MCF 10A (cell line): ENCODE measurements at regions of chr12 and their contacts with region 1.

Region 1: DNA sequence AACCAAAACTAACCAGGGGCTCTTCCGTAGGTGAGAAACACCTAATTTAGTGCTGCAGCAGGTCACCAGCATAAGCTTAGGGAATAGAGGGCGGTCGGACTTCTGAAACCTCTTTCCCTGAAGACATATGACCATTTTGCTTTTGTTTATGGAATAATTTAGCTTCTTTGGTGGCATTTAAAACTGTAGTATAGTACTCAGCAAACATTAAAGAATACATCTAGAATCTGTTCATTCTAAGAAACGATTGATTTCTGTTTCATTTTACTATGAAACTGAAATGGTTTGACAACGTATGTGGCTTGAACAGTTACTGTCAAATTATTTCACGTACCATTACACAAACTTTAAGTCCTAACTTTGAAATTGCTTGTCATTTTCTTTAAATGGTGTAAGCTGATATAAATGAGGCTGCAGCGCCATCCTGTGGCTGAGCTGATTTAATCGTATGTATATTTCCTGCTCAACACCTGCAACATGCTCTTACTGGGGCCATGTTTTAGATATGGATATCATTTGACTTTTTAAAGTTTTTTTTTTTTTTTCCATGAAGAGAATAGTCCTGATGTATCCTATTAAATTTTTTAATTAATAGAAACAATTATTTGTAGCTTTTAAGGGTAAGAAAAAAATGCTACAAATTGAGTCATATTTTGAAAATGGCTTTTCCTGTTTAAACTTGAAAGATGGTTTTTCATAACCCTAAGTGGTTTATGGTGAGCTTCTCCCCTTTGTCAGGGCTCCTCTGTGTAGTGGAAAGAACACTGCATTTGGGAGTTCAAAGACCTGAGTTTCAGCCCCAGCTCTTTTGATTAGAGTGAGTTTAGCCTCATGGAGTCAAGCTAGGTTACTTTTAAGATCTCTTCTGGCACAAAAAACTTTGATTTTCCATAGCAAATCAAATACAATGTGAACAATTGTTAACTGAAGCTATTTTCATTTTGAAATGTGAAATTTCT is 27.4 kb downstream of the CFAP54 start:
- DNase-seq: peak; percentile 78
- H3K4me3 Mint-ChIP-seq: no peak overlapping the region
- H3K27ac Mint-ChIP-seq: no peak overlapping the region
- H3K4me1 Mint-ChIP-seq: peaks cover 8% of the 10 kb centered on the region
- H3K27me3 Mint-ChIP-seq: no peaks in the 10 kb centered on the region
- CTCF ChIP-seq: peak; percentile 63

Region 2: GRCh38 chr12:95896846-95897245 is 619.9 kb before region 1 on chr12:
- CTCF ChIA-PET with region 1: no interaction called
- POLR2A ChIA-PET with region 1: no interaction called
- intact Hi-C with region 1: no loop called
- DNase-seq: no peak
- H3K4me3 Mint-ChIP-seq: no peak overlapping the region
- H3K27ac Mint-ChIP-seq: no peak overlapping the region
- H3K4me1 Mint-ChIP-seq: no peaks in the 10 kb centered on the region
- H3K27me3 Mint-ChIP-seq: peaks cover 13% of the 10 kb centered on the region
- CTCF ChIP-seq: no peak

Region 3: DNA sequence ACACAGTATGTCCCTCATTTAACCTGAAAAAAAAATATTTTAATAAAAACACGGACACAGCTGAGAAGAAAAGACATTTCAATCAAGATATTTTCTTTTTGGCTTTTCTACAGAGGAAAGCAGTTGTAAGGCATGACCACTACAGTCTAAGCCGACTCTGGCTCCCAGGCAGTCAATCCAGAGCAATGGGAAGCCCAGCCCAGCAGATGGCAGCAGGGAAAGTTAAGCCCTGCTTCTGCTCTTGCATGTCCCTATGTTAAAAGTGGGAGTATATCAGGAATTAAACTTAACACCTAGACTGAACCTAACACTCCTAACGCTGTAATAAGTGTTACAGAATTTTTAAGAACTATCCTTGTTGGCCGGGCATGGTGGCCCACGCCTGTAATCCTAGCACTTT is 501.1 kb before region 1 on chr12:
- CTCF ChIA-PET with region 1: interaction called, 14 read pairs
- POLR2A ChIA-PET with region 1: no interaction called
- intact Hi-C with region 1: no loop called
- DNase-seq: peak; percentile 43
- H3K4me3 Mint-ChIP-seq: no peak overlapping the region
- H3K27ac Mint-ChIP-seq: no peak overlapping the region
- H3K4me1 Mint-ChIP-seq: no peaks in the 10 kb centered on the region
- H3K27me3 Mint-ChIP-seq: no peaks in the 10 kb centered on the region
- CTCF ChIP-seq: peak; percentile 9

Region 4: DNA sequence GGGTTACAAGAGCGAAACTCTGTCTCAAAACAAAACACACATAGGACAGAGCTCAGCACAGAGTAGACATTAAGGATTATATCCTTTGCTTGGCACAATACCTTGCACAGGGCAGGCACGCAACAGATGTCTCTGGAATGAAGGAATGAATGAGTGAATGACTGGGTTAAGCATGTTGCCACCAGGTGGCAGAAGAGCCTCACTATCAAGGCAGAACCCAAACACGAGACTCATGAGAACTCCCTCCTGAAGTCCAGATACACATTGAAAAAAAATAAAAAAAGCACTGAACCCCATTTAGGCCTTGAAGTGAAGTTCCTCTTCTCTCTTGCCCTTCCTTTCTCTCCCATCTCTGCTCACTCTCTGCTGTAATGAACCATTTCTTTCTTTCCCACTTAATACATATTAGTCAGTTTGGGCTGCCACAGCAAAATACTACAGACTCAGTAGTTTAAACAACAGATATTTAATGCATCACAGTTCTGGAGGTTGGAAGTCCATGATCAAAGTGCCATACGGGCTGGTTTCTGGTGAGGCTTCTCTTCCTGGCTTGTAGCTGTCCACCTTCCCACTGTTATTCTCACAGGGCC is 454.8 kb before region 1 on chr12:
- CTCF ChIA-PET with region 1: interaction called, 104 read pairs
- POLR2A ChIA-PET with region 1: interaction called, 3 read pairs
- intact Hi-C with region 1: loop called (anchors 1 kb)
- DNase-seq: peak; percentile 87
- H3K4me3 Mint-ChIP-seq: no peak overlapping the region
- H3K27ac Mint-ChIP-seq: no peak overlapping the region
- H3K4me1 Mint-ChIP-seq: peaks cover 5% of the 10 kb centered on the region
- H3K27me3 Mint-ChIP-seq: no peaks in the 10 kb centered on the region
- CTCF ChIP-seq: peak; percentile 82

Region 5: GRCh38 chr12:96208801-96209549 is 307.8 kb before region 1 on chr12:
- CTCF ChIA-PET with region 1: interaction called, 78 read pairs
- POLR2A ChIA-PET with region 1: interaction called, 3 read pairs
- intact Hi-C with region 1: no loop called
- DNase-seq: no peak
- H3K4me3 Mint-ChIP-seq: no peak overlapping the region
- H3K27ac Mint-ChIP-seq: peak overlapping the region; percentile 78
- H3K4me1 Mint-ChIP-seq: peaks cover 42% of the 10 kb centered on the region
- H3K27me3 Mint-ChIP-seq: no peaks in the 10 kb centered on the region
- CTCF ChIP-seq: peak; percentile 14

Region 6: DNA sequence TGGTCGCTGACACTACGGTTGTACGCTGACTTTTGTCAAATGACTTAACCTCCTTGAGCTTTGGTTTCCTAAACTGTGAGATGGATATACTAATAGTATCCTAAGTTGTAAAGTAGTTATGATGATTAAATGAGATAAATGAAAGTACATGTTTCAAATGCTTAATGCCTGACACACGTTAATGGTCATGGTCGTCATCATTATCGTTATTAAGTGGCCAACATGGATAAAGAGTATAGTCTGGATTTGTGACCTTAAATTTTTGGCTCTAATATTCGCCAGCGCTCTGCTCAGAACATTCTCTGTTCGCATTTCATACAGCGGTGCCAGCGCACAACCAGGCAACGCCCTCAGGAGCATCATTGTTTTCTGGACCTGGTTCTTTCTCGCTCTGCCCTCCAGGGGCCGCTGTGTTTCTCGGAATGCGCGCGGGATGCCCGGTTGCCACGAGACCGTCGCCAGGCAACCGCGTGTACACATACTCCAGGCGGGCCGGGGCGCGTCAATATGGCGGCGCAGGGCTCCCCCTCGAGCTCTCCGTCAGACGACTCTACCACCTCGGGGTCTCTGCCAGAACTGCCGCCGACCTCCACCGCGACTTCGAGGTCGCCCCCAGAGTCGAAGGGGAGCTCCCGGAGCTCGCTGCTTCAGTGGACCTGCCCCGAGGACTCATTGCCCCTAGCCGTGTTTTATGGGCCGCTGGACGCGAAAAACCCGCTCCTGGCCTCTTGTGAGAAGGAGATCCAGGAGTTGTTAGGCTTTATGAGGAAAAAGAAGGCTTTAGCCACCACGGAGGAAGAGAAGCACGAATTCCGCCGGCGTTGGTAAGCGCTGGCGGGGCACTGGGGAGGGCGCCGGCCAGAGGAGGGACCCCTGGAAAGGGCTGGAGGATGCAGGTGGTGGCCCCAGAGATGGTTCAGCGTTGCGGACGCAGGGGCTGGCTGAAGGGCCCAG is 27.4 kb before region 1 on chr12 and contains the start of gene CFAP54:
- CTCF ChIA-PET with region 1: interaction called, 14 read pairs
- POLR2A ChIA-PET with region 1: no interaction called
- intact Hi-C with region 1: loop called (anchors 1 kb)
- DNase-seq: peak; percentile 94
- H3K4me3 Mint-ChIP-seq: peak within 1 kb of the TSS; percentile 85
- H3K27ac Mint-ChIP-seq: peak within 1 kb of the TSS; percentile 98
- H3K4me1 Mint-ChIP-seq: peaks cover 18% of the 10 kb centered on the region
- H3K27me3 Mint-ChIP-seq: no peaks in the 10 kb centered on the region
- CTCF ChIP-seq: peak; percentile 85
- total RNA-seq, gene CFAP54: 0.56 and 1.1 TPM in 2 replicates

Region 7: DNA sequence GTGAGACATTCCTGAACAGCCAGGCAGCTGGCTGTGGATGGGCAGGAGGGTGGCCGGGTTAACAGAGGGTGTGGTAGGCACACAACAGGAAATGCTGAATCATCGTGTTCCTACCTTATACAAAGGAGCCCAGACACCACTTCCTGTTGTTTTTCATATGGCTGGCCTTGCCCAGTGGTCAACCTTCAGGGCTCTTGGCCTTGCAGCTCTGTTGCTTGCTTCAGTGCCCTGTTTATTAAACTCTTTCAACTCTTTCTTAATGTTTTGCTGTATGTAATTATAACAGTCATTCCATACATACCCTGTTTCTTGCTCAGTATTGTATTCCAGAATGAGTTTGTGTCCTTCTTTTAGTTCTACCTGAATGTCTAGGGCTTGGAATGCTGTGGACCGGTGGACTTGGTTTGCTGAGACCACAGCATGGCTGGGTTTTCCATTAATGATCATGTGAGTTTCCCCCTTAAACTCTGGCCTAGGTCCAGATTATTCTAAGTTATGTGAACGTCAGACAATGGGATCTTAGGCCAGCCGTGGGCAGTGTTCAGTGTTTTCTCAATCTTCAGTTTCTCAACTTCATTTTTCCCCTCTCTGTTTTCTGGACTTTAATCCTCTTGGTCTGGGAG is 15.5 kb before region 1 on chr12:
- CTCF ChIA-PET with region 1: interaction called, 29 read pairs
- POLR2A ChIA-PET with region 1: no interaction called
- intact Hi-C with region 1: no loop called
- DNase-seq: peak; percentile 89
- H3K4me3 Mint-ChIP-seq: no peak overlapping the region
- H3K27ac Mint-ChIP-seq: peak overlapping the region; percentile 99
- H3K4me1 Mint-ChIP-seq: peaks cover 30% of the 10 kb centered on the region
- H3K27me3 Mint-ChIP-seq: no peaks in the 10 kb centered on the region
- CTCF ChIP-seq: no peak